Mammary epithelial cell (primary cell): ENCODE measurements at regions of chr10 and their contacts with region 1.

Region 1: DNA sequence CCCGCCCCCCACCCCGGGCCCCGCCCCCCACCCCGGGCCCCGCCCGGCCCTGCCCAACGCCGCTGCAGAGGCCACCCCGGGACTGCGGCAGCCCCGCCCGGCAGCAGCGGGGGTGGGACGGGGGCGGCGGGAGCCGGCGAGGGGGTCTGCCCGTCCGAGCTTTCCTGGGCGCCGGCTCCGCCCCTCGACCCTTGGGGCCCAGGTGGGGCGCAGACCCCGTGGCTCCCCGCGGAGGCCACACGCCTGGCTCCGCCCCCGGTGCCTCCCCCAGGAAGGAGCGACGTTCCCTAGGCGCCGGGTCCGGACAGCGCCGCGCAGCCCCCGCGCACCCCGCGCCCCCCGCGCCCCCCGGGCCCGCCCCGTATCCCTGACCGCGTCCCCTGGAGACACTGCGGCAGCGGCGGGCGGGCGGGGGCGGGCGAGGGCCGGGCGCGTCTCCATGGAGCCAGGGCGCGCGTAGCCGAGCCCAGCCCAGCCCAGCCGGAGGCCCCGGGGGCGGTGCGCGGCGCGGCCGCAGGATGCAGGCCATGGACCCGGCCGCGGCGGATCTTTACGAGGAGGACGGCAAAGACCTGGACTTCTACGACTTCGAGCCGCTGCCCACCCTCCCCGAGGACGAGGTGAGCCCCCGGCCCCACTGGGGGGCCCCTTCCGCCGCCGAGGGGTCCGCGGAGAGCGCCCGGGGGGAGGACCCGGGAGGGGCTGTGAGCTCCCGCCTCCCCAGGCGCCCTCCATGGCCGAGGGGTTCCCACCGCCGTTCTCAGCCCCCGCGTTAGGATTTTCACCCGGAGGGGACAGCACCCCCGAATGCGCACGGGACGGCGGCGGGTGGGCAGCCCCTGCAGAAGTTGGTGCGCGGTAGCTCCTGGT is at the start of gene KNDC1:
- DNase-seq: no peak
- H3K4me3 ChIP-seq: peak within 1 kb of the TSS in 2 of 3 experiments; percentile 19 to 32
- H3K27ac ChIP-seq: no peak within 1 kb of the TSS
- H3K4me1 ChIP-seq: no peaks in the 10 kb centered on the region
- H3K27me3 ChIP-seq: peaks cover 25% of the 10 kb centered on the region
- CTCF ChIP-seq: no peak
- total RNA-seq, gene KNDC1: 0.83 to 1.2 TPM

Region 2: GRCh38 chr10:133091316-133091715 is 68.9 kb before region 1 on chr10:
- CTCF ChIA-PET with region 1: no interaction called
- dilution Hi-C with region 1: loop called (anchors 5 kb)
- in situ Hi-C with region 1: no loop called
- intact Hi-C with region 1: no loop called
- DNase-seq: no peak
- H3K4me3 ChIP-seq: no peak overlapping the region
- H3K27ac ChIP-seq: no peak overlapping the region
- H3K4me1 ChIP-seq: no peaks in the 10 kb centered on the region
- H3K27me3 ChIP-seq: peaks cover 24% of the 10 kb centered on the region
- CTCF ChIP-seq: no peak

Region 3: GRCh38 chr10:133196936-133197758 is 37.0 kb after region 1 on chr10:
- CTCF ChIA-PET with region 1: no interaction called
- dilution Hi-C with region 1: no loop called
- in situ Hi-C with region 1: no loop called
- intact Hi-C with region 1: no loop called
- DNase-seq: no peak
- H3K4me3 ChIP-seq: no peak overlapping the region
- H3K27ac ChIP-seq: no peak overlapping the region
- H3K4me1 ChIP-seq: peaks cover 3% of the 10 kb centered on the region
- H3K27me3 ChIP-seq: no peaks in the 10 kb centered on the region
- CTCF ChIP-seq: no peak

Region 4: GRCh38 chr10:133214468-133215410 is 54.6 kb after region 1 on chr10:
- CTCF ChIA-PET with region 1: no interaction called
- dilution Hi-C with region 1: loop called (anchors 5 kb)
- in situ Hi-C with region 1: no loop called
- intact Hi-C with region 1: no loop called
- DNase-seq: no peak
- H3K4me3 ChIP-seq: no peak overlapping the region
- H3K27ac ChIP-seq: no peak overlapping the region
- H3K4me1 ChIP-seq: no peaks in the 10 kb centered on the region
- H3K27me3 ChIP-seq: peaks cover 3% of the 10 kb centered on the region
- CTCF ChIP-seq: no peak

Region 5: DNA sequence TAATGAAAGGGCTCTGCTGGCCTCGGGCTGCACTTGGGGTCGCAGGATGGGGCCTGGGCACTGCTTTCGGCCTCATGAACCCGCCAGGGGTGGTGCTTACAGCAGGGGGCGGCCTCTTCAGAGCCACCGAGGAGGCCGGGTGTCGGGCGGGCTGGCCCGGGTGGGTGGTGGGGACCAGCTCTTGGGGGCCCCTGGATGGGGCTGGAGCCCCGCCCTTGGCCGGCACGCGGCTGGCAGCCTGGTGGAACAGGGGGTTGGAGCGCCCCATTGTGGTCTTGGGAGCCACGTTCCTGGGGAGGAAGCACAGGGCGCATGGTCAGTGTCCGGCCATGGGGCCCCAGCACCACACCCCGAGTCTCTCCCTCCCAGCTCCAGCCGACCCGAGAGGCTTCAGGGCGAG is 107.6 kb after region 1 on chr10:
- CTCF ChIA-PET with region 1: no interaction called
- dilution Hi-C with region 1: loop called (anchors 5 kb)
- in situ Hi-C with region 1: no loop called
- intact Hi-C with region 1: no loop called
- DNase-seq: no peak
- H3K4me3 ChIP-seq: no peak overlapping the region
- H3K27ac ChIP-seq: no peak overlapping the region
- H3K4me1 ChIP-seq: peaks cover 10% of the 10 kb centered on the region
- H3K27me3 ChIP-seq: no peaks in the 10 kb centered on the region
- CTCF ChIP-seq: no peak

Region 6: GRCh38 chr10:133422821-133423771 is 262.9 kb after region 1 on chr10:
- CTCF ChIA-PET with region 1: no interaction called
- dilution Hi-C with region 1: no loop called
- in situ Hi-C with region 1: no loop called
- intact Hi-C with region 1: no loop called
- DNase-seq: no peak
- H3K4me3 ChIP-seq: peak overlapping the region in 1 of 3 experiments; percentile 18
- H3K27ac ChIP-seq: no peak overlapping the region
- H3K4me1 ChIP-seq: peaks cover 4% of the 10 kb centered on the region
- H3K27me3 ChIP-seq: no peaks in the 10 kb centered on the region
- CTCF ChIP-seq: no peak

Region 7: GRCh38 chr10:133618851-133619250 is 458.7 kb after region 1 on chr10:
- CTCF ChIA-PET with region 1: no interaction called
- dilution Hi-C with region 1: no loop called
- in situ Hi-C with region 1: no loop called
- intact Hi-C with region 1: no loop called
- DNase-seq: no peak
- H3K4me3 ChIP-seq: no peak overlapping the region
- H3K27ac ChIP-seq: no peak overlapping the region
- H3K4me1 ChIP-seq: no peaks in the 10 kb centered on the region
- H3K27me3 ChIP-seq: peaks cover 1% of the 10 kb centered on the region
- CTCF ChIP-seq: no peak